H1 (cell line): ENCODE measurements at regions of chr2 and their contacts with region 1.

Region 1: DNA sequence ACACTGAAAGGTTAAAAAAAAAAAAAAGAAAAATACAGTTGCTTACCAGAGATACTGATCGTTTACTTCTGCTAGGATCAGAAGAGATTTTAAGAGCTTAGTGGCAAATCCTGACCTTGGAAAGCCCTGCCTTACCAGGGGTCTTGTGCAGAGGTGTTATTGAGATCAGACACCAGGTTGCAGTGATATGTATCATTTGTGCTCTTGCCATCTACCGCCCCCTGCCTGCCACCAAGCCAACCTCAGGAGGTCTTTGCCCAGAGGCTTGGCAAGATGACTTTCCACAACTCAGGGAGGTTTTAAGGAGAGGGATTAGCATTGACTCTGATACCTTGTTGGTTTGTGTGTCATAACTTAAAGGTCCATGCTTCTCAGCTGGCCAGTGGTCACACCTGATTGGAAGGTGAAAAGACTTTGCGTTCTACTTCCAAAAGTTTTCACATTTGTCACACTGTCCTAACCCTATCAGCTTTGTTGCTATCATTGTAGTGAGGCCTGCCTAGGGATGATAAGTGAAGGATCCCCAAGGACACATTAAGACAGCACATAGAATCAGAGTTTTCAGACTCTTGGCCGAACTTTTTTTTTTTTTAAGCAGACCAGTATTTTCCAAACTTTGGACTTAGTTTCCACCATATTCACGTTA is 46.2 kb upstream of the MGAT5 start:
- DNase-seq: peak; percentile 47 to 66
- H3K4me3 ChIP-seq: no peak overlapping the region
- H3K27ac ChIP-seq: no peak overlapping the region
- H3K4me1 ChIP-seq: peaks cover 15 to 37% (median 24%) of the 10 kb centered on the region in 4 experiments
- H3K27me3 ChIP-seq: no peaks in the 10 kb centered on the region
- CTCF ChIP-seq: peak; percentile 83 to 92 (median 90)
- EP300 ChIP-seq: no peak
- POLR2A ChIP-seq: no peak
- RAD21 ChIP-seq: peak; percentile 87 to 92

Region 2: GRCh38 chr2:134148843-134149472 is 58.7 kb before region 1 on chr2:
- CTCF ChIA-PET with region 1: interaction called, 10 read pairs
- POLR2A ChIA-PET with region 1: no interaction called
- DNase-seq: no peak
- H3K4me3 ChIP-seq: no peak overlapping the region
- H3K27ac ChIP-seq: no peak overlapping the region
- H3K4me1 ChIP-seq: peaks cover 0 to 6% (median 5%) of the 10 kb centered on the region in 4 experiments; a peak in 3 of 7 replicates
- H3K27me3 ChIP-seq: no peaks in the 10 kb centered on the region
- CTCF ChIP-seq: no peak
- EP300 ChIP-seq: no peak
- POLR2A ChIP-seq: no peak
- RAD21 ChIP-seq: no peak

Region 3: DNA sequence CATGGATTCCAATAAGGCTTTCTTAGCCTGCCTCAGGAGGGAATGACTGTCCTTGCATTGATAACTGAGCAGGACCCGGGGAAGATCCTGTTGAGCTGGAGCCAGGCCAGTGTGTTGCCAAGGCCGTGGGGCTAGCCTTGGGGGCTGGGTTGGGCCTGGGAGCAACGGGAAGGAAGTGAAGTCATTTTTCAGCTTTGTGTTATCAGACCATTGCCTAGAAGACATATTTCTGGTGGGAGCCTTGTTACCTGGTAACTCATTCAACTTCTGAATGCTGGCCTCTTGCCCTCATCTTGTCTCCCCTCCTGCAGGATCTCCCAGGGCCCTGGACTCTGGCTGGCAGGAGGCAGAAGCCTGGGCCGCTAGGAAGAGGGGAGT is 46.5 kb before region 1 on chr2:
- CTCF ChIA-PET with region 1: interaction called, 14 read pairs
- POLR2A ChIA-PET with region 1: no interaction called
- DNase-seq: no peak
- H3K4me3 ChIP-seq: no peak overlapping the region
- H3K27ac ChIP-seq: no peak overlapping the region
- H3K4me1 ChIP-seq: peaks cover 9 to 29% (median 18%) of the 10 kb centered on the region in 4 experiments
- H3K27me3 ChIP-seq: no peaks in the 10 kb centered on the region
- CTCF ChIP-seq: no peak
- EP300 ChIP-seq: no peak
- POLR2A ChIP-seq: no peak
- RAD21 ChIP-seq: no peak

Region 4: GRCh38 chr2:134181210-134181609 is 26.5 kb before region 1 on chr2:
- CTCF ChIA-PET with region 1: interaction called, 13 read pairs
- POLR2A ChIA-PET with region 1: no interaction called
- DNase-seq: no peak
- H3K4me3 ChIP-seq: no peak overlapping the region
- H3K27ac ChIP-seq: no peak overlapping the region
- H3K4me1 ChIP-seq: peaks cover 2 to 7% (median 6%) of the 10 kb centered on the region in 4 experiments; a peak in 3 of 7 replicates
- H3K27me3 ChIP-seq: no peaks in the 10 kb centered on the region
- CTCF ChIP-seq: no peak
- EP300 ChIP-seq: no peak
- POLR2A ChIP-seq: no peak
- RAD21 ChIP-seq: no peak

Region 5: GRCh38 chr2:134232868-134233727 is 25.4 kb after region 1 on chr2:
- CTCF ChIA-PET with region 1: interaction called, 10 read pairs
- POLR2A ChIA-PET with region 1: interaction called, 3 read pairs
- DNase-seq: no peak
- H3K4me3 ChIP-seq: no peak overlapping the region
- H3K27ac ChIP-seq: no peak overlapping the region
- H3K4me1 ChIP-seq: no peaks in the 10 kb centered on the region
- H3K27me3 ChIP-seq: no peaks in the 10 kb centered on the region; a peak in 2 of 7 replicates
- CTCF ChIP-seq: no peak
- EP300 ChIP-seq: no peak
- POLR2A ChIP-seq: no peak
- RAD21 ChIP-seq: no peak

Region 6: DNA sequence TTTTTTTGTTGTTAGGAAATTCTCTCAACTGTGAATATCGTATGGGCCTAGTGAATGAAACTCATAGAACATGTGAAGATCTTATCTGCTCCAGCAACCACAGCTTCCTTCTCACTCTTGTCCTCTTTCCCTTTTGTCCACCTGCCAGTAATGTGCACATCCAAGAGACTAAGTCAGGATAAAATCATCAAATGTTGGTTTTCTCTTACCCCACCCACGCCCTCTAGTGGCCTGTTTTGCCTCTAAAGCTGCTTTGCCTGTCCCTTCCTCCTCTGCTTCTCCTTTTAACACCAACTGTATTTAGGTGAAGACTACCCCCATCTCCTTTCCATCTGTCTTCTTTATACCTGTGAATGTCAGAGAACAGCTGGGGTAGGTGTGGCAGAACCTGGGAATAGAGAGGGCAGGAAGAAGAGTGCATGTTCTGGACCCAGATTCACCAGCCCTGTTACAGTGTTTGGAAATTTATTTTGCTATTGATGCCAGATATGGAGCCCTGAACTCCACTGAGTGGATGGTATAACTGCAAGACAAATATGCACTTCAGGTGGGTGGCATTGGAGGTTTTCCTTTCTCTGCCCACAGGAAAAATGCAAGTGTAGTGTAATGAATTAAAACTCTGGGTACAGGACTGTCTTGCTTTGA is 37.8 kb after region 1 on chr2:
- CTCF ChIA-PET with region 1: interaction called, 18 read pairs
- POLR2A ChIA-PET with region 1: no interaction called
- DNase-seq: peak in 1 of 2 experiments; percentile 87
- H3K4me3 ChIP-seq: no peak overlapping the region
- H3K27ac ChIP-seq: no peak overlapping the region
- H3K4me1 ChIP-seq: peaks cover 0 to 6% (median 0%) of the 10 kb centered on the region in 4 experiments; a peak in 1 of 7 replicates
- H3K27me3 ChIP-seq: no peaks in the 10 kb centered on the region
- CTCF ChIP-seq: peak; percentile 49 to 90 (median 59)
- EP300 ChIP-seq: no peak
- POLR2A ChIP-seq: no peak
- RAD21 ChIP-seq: peak; percentile 66 to 72

Region 7: DNA sequence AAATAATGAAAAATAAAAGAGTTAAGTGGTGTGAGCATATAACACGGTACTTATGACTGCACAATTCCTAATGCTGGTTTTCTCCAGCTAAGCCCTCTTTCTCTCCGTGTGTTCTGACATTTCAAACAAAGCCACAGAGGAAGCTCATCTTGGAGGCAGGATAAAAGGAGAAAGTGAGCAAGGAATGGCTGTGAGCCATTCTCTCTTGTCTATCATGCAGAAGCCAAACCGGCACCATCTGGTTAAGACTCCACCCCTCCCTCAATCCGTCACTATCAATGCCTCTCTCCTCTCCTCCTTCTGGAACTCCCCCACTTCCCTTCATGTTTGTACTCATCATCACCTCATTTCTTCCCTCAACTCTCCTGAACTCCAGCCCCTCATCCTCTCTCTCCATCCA is 300.7 kb after region 1 on chr2:
- CTCF ChIA-PET with region 1: no interaction called
- POLR2A ChIA-PET with region 1: no interaction called
- DNase-seq: no peak
- H3K4me3 ChIP-seq: no peak overlapping the region
- H3K27ac ChIP-seq: no peak overlapping the region
- H3K4me1 ChIP-seq: no peaks in the 10 kb centered on the region; a peak in 1 of 7 replicates
- H3K27me3 ChIP-seq: no peaks in the 10 kb centered on the region; a peak in 1 of 7 replicates
- CTCF ChIP-seq: no peak
- EP300 ChIP-seq: no peak
- POLR2A ChIP-seq: no peak
- RAD21 ChIP-seq: no peak